PC-9 (cell line): ENCODE measurements at regions of chr5 and their contacts with region 1.

Region 1: DNA sequence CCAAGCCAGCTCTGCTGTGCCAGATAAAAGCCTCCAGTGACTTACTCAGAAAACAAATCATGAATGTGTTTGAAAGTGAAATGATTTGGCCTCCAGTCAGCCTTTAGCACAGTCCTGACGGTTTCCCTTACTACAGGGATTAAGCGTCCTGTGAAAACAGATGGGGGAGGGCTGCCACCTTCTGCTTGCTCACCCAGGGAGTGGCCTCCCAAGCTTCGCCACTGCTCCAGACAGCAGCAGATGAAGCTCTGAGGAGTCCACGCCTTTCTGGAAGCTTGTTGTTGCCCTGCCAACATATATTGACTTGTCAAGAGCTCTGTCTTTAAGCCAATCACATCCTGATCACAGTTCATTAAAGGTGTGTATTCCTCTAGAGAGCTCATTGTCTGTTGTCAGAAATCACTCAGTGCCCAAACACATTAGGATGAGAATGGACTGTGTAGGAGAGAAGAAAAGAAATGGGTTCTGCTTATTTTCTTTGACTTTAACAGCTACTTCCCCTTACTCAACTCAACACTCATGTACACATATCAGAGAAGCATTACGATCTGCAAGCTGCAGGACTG is 4.9 kb upstream of the FYB1 start:
- DNase-seq: peak; percentile 70 to 89
- H3K4me3 ChIP-seq: no peak overlapping the region
- H3K27ac ChIP-seq: peak overlapping the region; percentile 4; the same call in 1 of the 2 replicates
- H3K4me1 ChIP-seq: peaks cover 34% of the 10 kb centered on the region
- H3K27me3 ChIP-seq: no peaks in the 10 kb centered on the region
- CTCF ChIP-seq: no peak

Region 2: DNA sequence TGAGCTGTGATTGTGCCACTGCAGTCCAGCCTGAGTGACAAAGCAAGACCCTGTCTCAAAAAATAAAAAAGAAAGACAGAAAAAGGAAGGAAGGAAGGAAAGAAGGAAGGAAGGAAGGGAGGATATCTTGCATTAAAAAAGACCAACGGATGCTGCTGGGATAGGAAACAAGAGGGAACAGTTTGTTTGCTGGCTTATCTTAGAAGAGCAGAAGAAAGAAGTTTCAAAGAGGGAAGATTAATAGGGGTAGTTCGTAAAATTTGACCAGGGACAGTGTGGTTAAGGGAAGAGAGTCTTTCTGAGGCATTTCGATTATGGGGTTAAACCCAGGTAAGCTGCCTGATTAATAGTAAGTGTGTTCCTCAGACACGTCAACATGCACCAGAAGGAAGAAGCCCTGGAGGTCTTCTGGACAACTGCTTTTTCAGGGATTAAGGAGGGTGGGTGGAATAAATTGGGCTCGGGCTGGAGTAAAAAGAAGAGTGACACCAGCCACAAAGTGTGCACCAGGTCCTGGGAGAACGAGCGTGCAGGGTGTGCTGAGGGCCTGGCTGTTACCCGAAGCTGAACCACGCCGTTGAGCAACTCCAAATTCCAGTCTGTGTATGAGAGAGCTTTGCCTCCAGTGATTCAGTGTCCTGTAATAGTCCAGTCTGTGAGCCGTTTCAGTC is 29.7 kb before region 1 on chr5:
- CTCF ChIA-PET with region 1: interaction called, 6 read pairs
- POLR2A ChIA-PET with region 1: interaction called, 16 read pairs
- intact Hi-C with region 1: no loop called
- DNase-seq: peak; percentile 78 to 93
- H3K4me3 ChIP-seq: peak overlapping the region; percentile 13; the same call in 1 of the 2 replicates
- H3K27ac ChIP-seq: peak overlapping the region; percentile 91
- H3K4me1 ChIP-seq: peaks cover 56% of the 10 kb centered on the region
- H3K27me3 ChIP-seq: no peaks in the 10 kb centered on the region
- CTCF ChIP-seq: no peak

Region 3: DNA sequence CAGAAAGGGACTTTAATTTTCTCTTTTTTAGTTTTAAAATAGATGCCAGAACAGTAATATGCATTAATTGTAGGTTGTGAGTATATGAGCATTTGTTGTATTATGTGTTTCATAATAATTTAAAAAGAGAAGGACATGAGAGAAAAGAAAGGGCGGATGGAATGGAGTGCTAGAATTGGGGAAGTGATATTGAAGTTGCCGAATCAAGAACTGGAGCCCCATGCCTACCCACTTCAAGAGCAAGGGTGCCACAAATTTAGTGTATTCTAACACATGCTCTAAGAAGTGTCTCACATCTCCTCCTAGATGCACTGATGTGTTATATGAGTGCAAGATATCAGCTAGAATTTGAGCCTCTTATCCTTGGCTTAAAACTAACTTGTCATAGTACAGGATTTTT is 38.7 kb after region 1 on chr5:
- CTCF ChIA-PET with region 1: no interaction called
- POLR2A ChIA-PET with region 1: interaction called, 10 read pairs
- intact Hi-C with region 1: no loop called
- DNase-seq: no peak
- H3K4me3 ChIP-seq: no peak overlapping the region
- H3K27ac ChIP-seq: no peak overlapping the region
- H3K4me1 ChIP-seq: 0 out of 2 replicates have a peak, but pooled peaks cover 5% of the 10 kb centered on the region
- H3K27me3 ChIP-seq: no peaks in the 10 kb centered on the region
- CTCF ChIP-seq: no peak